Calu3 (cell line): ENCODE measurements at regions of chr21 and their contacts with region 1.

Region 1: GRCh38 chr21:37582590-37582989 is 216.0 kb downstream of the DYRK1A start:
- DNase-seq: peak; percentile 39
- H3K4me3 Mint-ChIP-seq: no peak overlapping the region
- H3K27ac Mint-ChIP-seq: no peak overlapping the region
- H3K4me1 Mint-ChIP-seq: no peaks in the 10 kb centered on the region
- H3K27me3 Mint-ChIP-seq: no peaks in the 10 kb centered on the region
- CTCF ChIP-seq: peak; percentile 22

Region 2: GRCh38 chr21:37166733-37167132 is 415.9 kb before region 1 on chr21:
- CTCF ChIA-PET with region 1: no interaction called
- intact Hi-C with region 1: loop called (anchors 10 kb)
- DNase-seq: peak; percentile 10
- H3K4me3 Mint-ChIP-seq: no peak overlapping the region
- H3K27ac Mint-ChIP-seq: no peak overlapping the region
- H3K4me1 Mint-ChIP-seq: peaks cover 8% of the 10 kb centered on the region
- H3K27me3 Mint-ChIP-seq: no peaks in the 10 kb centered on the region
- CTCF ChIP-seq: no peak

Region 3: DNA sequence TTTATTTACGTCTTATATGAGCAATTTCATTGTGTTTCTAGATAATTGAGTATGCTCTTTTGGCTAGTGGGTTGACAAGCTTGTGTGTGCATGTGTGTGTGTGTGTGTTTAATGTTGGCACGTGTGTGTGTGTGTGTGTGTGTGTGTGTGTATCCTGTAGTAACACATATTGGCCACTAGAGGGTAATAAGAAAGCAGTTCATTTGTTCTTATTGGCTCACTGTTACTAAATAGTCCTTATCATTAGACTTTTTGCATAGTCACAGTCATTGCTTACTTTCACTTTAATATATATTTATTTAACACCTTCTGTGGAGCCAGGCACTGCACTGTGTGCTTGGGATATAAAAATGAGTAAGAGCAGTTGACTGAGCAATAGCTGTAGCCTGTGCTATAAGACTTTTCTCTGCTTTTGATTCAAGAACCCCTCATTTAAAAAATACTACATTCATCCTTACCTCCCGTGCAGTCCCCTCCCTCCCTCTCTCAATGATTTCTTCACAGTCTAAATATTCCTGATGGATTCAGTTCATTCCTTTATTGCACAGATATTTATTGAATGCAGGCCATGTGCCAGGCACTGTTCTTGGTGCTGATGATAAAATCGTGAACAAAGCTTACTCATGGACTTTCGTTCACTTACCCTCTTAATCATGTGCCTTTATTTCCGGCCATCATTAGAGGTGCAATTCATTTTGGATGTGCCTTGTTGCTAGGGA is 119.3 kb before region 1 on chr21:
- CTCF ChIA-PET with region 1: no interaction called
- intact Hi-C with region 1: loop called (anchors 10 kb)
- DNase-seq: no peak
- H3K4me3 Mint-ChIP-seq: peak overlapping the region; percentile 44
- H3K27ac Mint-ChIP-seq: peak overlapping the region; percentile 54
- H3K4me1 Mint-ChIP-seq: peaks cover 35% of the 10 kb centered on the region
- H3K27me3 Mint-ChIP-seq: no peaks in the 10 kb centered on the region
- CTCF ChIP-seq: no peak